HEK293T (cell line): ENCODE measurements at regions of chr6 and their contacts with region 1.

Region 1: GRCh38 chr6:28981833-28982475 is 23.2 kb downstream of the ZNF311 start:
- DNase-seq: peak; percentile 69

Region 2: DNA sequence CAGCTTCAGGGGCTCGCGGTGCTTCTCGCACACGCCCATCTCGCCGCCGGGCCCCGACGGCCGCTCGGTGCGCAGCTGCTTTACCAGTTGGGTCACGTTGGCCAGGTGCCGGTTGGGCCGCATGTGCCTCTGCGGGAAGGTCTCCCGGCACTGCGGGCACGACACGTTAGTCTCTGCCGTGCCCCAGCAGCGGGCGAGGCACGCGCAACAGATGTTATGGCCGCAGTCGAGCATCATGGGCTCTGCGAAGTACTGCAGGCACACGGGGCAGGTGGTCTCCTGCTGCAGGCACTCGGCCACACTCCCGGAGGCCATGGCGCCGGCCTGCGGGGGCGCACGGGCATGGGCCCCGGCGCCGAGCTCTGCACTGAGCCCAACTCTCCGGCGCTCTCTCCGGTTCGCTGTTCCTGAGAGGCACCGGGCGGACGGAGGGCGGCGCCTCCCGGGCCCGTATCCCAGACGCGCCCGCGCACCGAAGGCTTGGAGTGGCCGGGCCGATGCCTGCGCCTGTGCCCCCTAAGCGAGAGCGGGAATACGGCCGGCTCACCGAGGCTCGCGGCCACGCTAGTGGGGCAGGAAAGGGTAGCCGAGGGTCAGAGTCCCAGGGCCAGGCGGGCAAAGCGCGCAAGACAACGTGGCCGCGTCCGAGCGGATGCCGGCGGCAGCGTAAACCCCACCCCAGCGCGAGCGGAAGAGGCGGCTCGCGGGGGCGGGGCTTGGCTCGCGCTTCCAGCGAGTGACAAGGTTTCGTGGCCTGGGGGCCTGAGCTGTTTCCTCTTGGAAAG is 58.4 kb before region 1 on chr6 and contains the start of gene TRIM27:
- CTCF ChIA-PET with region 1: interaction called, 3 read pairs
- POLR2A ChIA-PET with region 1: interaction called, 23 read pairs
- DNase-seq: peak; percentile 86

Region 3: DNA sequence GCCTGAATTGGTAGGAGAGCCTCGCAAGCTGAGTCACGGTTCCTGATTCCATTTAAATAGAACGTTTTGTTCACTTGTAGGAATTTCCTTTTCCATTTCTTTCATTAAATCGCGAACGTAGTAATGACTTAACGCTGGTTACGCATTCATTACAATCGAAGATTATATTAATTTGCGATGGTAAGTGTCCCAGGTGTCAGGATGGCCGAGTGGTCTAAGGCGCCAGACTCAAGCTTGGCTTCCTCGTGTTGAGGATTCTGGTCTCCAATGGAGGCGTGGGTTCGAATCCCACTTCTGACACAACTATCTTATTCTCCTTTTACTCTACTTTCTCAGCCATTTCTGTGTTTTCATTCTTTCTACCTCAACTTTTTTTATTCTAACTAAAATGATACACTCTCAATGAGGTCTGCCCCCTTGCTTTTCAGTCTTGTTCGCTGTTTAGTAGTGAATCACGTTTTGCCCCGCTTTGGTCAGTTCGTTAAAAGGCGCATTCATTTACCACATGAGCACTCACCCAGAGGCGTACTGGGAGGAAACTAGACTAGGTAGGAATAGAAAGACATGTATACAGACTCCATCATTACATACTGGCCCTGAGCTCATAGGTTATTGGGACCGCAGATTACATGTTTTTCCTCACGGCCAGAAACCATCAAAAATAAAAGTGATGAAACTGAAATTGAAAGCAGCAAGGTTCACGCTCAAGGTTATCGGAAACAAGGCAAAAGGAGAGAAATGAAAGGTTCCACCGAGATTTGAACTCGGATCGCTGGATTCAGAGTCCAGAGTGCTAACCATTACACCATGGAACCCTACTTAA is 40.9 kb before region 1 on chr6:
- CTCF ChIA-PET with region 1: no interaction called
- POLR2A ChIA-PET with region 1: interaction called, 16 read pairs
- DNase-seq: peak; percentile 51

Region 4: GRCh38 chr6:28996844-28997510 is 15.0 kb after region 1 on chr6:
- CTCF ChIA-PET with region 1: interaction called, 4 read pairs
- POLR2A ChIA-PET with region 1: interaction called, 17 read pairs
- DNase-seq: no peak

Region 5: GRCh38 chr6:29016559-29017427 is 34.8 kb after region 1 on chr6:
- CTCF ChIA-PET with region 1: interaction called, 6 read pairs
- POLR2A ChIA-PET with region 1: interaction called, 34 read pairs
- DNase-seq: peak; percentile 71